Endothelial cell of umbilical vein (primary cell): ENCODE measurements at regions of chr1 and their contacts with region 1.

Region 1: GRCh38 chr1:203512830-203513611 is 19.1 kb downstream of the OPTC start:
- DNase-seq: peak; percentile 85
- H3K4me3 ChIP-seq: no peak overlapping the region
- H3K27ac ChIP-seq: peak overlapping the region; percentile 83
- H3K4me1 ChIP-seq: peaks cover 35% of the 10 kb centered on the region
- H3K27me3 ChIP-seq: no peaks in the 10 kb centered on the region
- CTCF ChIP-seq: no peak
- POLR2A ChIP-seq: no peak

Region 2: GRCh38 chr1:203493901-203494300 is 19.1 kb before region 1 on chr1 and contains the start of gene OPTC:
- CTCF ChIA-PET with region 1: no interaction called
- POLR2A ChIA-PET with region 1: no interaction called
- dilution Hi-C with region 1: no loop called
- intact Hi-C with region 1: no loop called
- DNase-seq: no peak
- H3K4me3 ChIP-seq: no peak within 1 kb of the TSS
- H3K27ac ChIP-seq: no peak within 1 kb of the TSS
- H3K4me1 ChIP-seq: no peaks in the 10 kb centered on the region
- H3K27me3 ChIP-seq: peaks cover 8 to 10% of the 10 kb centered on the region in 2 experiments
- CTCF ChIP-seq: no peak
- POLR2A ChIP-seq: no peak
- total RNA-seq, gene OPTC: not detected in 2 replicates

Region 3: GRCh38 chr1:203795441-203796235 is 282.6 kb after region 1 on chr1 and contains the starts of genes ZBED6 and ZC3H11A:
- CTCF ChIA-PET with region 1: no interaction called
- POLR2A ChIA-PET with region 1: no interaction called
- dilution Hi-C with region 1: no loop called
- intact Hi-C with region 1: loop called (anchors 1 kb)
- DNase-seq: peak; percentile 98
- H3K4me3 ChIP-seq: peak within 1 kb of the TSS; percentile 79 to 100 (median 98)
- H3K27ac ChIP-seq: peak within 1 kb of the TSS; percentile 92
- H3K4me1 ChIP-seq: peaks cover 23% of the 10 kb centered on the region
- H3K27me3 ChIP-seq: no peaks in the 10 kb centered on the region
- CTCF ChIP-seq: no peak
- POLR2A ChIP-seq: peak; percentile 55
- total RNA-seq, gene ZBED6: 36.7 and 38.9 TPM in 2 replicates
- total RNA-seq, gene ZC3H11A: 66.6 and 72.6 TPM in 2 replicates